Mammary epithelial cell (primary cell): ENCODE measurements at regions of chr3 and their contacts with region 1.

Region 1: DNA sequence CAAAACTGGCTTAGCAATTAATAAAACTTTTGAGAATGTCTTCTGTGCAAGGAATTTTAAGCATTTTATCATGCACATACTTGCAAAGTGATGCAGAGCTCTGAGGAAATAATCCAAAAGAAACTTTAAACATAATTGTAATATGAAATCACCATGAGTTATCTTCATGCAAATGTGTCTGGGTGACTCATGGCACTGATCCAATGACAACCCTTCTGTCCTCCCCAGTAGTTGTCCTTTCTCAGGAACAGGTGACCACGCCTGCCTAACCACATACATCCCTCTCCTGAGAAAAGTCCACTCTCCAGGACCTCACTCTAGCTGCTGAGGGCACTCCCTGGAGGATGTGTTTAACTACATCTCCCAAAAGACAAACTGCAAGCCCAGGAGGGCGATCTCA is 530.6 kb upstream of the IL12A start:
- DNase-seq: peak; percentile 97
- H3K4me3 ChIP-seq: no peak overlapping the region
- H3K27ac ChIP-seq: peak overlapping the region; percentile 66
- H3K4me1 ChIP-seq: peaks cover 28% of the 10 kb centered on the region
- H3K27me3 ChIP-seq: no peaks in the 10 kb centered on the region
- CTCF ChIP-seq: peak in 1 of 2 donors; percentile 5

Region 2: DNA sequence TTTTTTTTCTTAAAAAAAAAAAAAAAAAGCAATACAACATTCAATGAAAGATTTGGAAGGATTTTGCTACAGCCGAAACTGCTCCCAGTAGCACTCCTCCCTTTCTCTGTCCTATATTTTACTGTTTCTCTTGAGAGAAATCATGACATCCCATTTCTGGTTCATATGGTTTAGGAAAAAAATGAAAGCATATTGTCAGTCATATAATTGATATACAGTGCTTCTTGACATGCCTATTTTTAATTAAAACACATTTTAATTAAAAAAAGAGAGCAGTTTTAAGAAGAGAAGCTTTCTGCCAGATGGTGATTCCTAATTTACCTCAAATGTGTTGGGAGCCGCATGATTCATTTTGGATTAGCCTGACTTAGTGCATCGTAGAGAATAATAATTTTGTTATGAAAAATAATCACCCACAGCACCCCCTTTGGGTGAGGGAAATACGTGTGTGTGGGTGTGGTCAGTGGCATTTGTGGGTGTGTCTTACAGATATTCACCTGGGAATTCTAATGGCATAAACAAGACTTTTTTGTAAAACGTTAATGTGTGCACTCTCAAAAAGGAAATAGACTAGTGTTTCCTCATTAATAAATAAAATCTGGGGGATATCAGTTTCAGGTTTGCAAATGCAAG is 111.6 kb before region 1 on chr3:
- CTCF ChIA-PET with region 1: no interaction called
- dilution Hi-C with region 1: no loop called
- in situ Hi-C with region 1: no loop called
- intact Hi-C with region 1: no loop called
- DNase-seq: no peak
- H3K4me3 ChIP-seq: no peak overlapping the region
- H3K27ac ChIP-seq: no peak overlapping the region
- H3K4me1 ChIP-seq: no peaks in the 10 kb centered on the region
- H3K27me3 ChIP-seq: no peaks in the 10 kb centered on the region
- CTCF ChIP-seq: no peak

Region 3: GRCh38 chr3:159480046-159480445 is 22.0 kb after region 1 on chr3:
- CTCF ChIA-PET with region 1: no interaction called
- dilution Hi-C with region 1: no loop called
- in situ Hi-C with region 1: no loop called
- intact Hi-C with region 1: loop called (anchors 1 kb)
- DNase-seq: peak; percentile 90
- H3K4me3 ChIP-seq: no peak overlapping the region
- H3K27ac ChIP-seq: no peak overlapping the region
- H3K4me1 ChIP-seq: peaks cover 19% of the 10 kb centered on the region
- H3K27me3 ChIP-seq: no peaks in the 10 kb centered on the region
- CTCF ChIP-seq: no peak

Region 4: DNA sequence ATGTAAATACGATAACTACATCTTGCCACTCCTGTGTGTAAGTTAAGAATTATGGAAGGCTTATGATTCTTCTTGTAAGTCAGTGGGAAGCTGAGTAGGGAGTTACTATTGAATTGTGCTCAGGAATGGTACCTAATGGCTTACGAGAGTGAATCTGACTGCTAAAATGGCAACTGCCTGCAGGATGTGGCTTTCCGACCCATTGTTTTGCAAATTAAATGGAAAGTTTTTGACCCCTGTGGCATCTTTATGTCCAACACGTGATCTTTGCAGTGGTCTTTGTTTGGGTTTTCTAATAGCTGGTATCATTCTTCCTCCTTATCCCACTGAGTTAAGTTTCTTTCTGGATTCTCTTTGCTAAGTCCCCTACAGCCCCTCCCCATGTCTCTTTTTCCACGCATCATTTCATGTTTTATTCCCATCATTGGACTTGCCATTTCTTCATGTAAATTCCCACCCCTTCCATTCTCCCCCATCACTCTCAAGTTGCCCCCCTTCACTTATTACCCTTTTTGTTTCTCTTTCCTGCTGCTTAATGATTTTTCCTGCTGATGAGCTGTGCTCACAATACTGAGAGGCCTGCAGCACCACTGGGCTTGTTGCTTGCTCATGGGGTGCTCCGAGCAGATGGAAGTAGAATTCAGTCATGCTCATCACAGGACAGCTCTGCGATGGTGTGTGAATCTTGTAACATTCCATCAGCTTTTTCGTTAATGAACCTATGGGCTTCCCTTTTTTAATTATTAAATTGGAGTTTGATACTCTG is 102.4 kb after region 1 on chr3:
- CTCF ChIA-PET with region 1: no interaction called
- dilution Hi-C with region 1: no loop called
- in situ Hi-C with region 1: no loop called
- intact Hi-C with region 1: no loop called
- DNase-seq: no peak
- H3K4me3 ChIP-seq: no peak overlapping the region
- H3K27ac ChIP-seq: no peak overlapping the region
- H3K4me1 ChIP-seq: no peaks in the 10 kb centered on the region
- H3K27me3 ChIP-seq: no peaks in the 10 kb centered on the region
- CTCF ChIP-seq: no peak